Heart right ventricle (tissue), 16 donors: ENCODE measurements at regions of chr22 and their contacts with region 1.

Region 1: GRCh38 chr22:28442264-28442710 is 237.4 kb downstream of the TTC28 start:
- DNase-seq: peak; percentile 77 to 83
- ATAC-seq: peak; percentile 89 to 97 (median 94)
- H3K4me3 ChIP-seq: peak overlapping the region; percentile 38 to 79 (median 66)
- H3K27ac ChIP-seq: peak overlapping the region; percentile 74 to 91 (median 83)
- H3K4me1 ChIP-seq: peaks cover 0 to 57% (median 30%) of the 10 kb centered on the region in 9 donors
- H3K27me3 ChIP-seq: no peaks in the 10 kb centered on the region
- CTCF ChIP-seq: peak; percentile 55 to 86 (median 76)

Region 2: DNA sequence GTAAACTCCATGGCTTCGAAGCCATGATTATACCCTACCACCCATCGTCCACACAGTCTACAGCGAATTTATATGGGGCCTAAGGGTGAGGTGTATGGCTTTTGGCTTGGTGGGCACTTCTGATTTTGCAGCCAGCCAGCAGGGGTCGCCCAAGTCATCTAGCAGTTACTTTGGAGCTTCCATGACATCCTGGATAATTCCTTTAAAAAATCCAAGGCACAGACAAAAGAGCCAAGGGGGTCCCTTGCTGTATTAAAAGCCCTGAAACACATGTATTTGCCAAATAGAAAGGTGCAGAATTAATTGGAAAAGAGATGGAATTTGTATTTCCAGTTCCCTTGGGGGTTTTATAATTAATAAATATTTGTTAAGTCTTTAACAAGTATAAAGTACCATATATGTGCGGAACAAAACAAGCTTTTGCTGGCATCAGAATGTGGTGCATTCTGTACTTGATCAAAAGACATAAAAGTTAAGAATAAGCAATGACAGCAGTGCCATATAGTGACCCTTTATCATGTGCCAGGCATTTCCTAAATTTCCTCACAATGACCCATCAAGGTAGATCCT is 390.4 kb before region 1 on chr22:
- intact Hi-C with region 1: loop called (anchors 2 to 10 kb)
- DNase-seq: peak; percentile 72 to 81
- ATAC-seq: peak in 7 of 8 donors; percentile 50 to 73 (median 71)
- H3K4me3 ChIP-seq: no peak overlapping the region
- H3K27ac ChIP-seq: no peak overlapping the region
- H3K4me1 ChIP-seq: peaks cover 0 to 31% (median 7%) of the 10 kb centered on the region in 9 donors
- H3K27me3 ChIP-seq: no peaks in the 10 kb centered on the region
- CTCF ChIP-seq: peak; percentile 77 to 95 (median 87)

Region 3: DNA sequence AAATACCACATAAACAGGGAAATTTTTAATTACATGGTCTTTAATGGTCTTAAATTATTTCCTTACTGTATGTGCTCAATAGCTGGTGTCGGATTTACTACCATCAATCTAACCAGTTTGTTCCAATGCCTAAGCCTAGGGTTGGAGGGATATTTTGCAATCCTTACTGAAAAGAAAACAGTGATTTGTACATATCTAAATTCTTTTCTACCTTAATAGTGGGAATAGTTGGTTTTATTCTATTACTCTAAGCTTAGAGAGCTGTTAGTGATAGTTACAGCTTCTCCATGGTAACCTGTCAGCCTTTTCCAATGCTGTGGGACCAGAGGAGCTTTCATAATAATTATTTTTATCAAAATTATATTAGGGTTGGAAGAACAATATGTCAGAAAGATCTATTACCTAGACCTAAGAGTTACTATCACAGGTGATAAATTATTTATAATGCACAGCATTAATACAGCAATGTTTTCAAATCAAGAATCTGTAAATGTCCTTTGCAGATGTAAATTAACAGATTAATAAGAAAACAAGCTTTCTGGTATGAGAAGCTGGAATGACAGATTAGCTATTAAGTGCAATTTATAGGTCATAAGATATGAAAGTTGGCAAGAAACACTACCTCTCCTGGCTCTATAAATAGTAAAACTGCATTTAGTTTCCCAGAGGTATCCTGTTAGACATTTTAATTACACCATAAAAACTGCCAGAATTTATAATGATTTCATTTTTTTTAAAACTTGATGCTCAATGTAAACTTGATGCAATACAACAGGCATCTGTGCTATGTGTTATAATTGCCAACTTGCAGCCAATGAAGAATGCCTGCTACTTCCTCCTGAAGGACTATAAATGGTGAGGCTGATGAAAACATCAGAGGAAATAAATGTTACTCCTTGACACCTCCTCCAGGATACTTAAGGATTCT is 261.2 kb before region 1 on chr22:
- intact Hi-C with region 1: loop called in 1 of 10 experiments (anchors 5 kb)
- DNase-seq: no peak
- ATAC-seq: peak in 2 of 8 donors; percentile 20 to 71
- H3K4me3 ChIP-seq: no peak overlapping the region
- H3K27ac ChIP-seq: no peak overlapping the region
- H3K4me1 ChIP-seq: peaks cover 0 to 36% (median 31%) of the 10 kb centered on the region in 9 donors
- H3K27me3 ChIP-seq: no peaks in the 10 kb centered on the region
- CTCF ChIP-seq: no peak

Region 4: GRCh38 chr22:28268171-28268570 is 174.1 kb before region 1 on chr22:
- intact Hi-C with region 1: loop called in 1 of 10 experiments (anchors 5 kb)
- DNase-seq: no peak
- ATAC-seq: peak in 1 of 8 donors; percentile 38
- H3K4me3 ChIP-seq: no peak overlapping the region
- H3K27ac ChIP-seq: peak overlapping the region in 2 of 10 donors; percentile 44 to 62
- H3K4me1 ChIP-seq: peaks cover 0 to 34% (median 20%) of the 10 kb centered on the region in 9 donors
- H3K27me3 ChIP-seq: no peaks in the 10 kb centered on the region
- CTCF ChIP-seq: no peak

Region 5: GRCh38 chr22:28594797-28595462 is 152.6 kb after region 1 on chr22:
- intact Hi-C with region 1: loop called in 2 of 10 experiments (anchors 10 kb)
- DNase-seq: no peak
- ATAC-seq: peak; percentile 70 to 92 (median 90)
- H3K4me3 ChIP-seq: no peak overlapping the region
- H3K27ac ChIP-seq: no peak overlapping the region
- H3K4me1 ChIP-seq: peaks cover 0 to 8% (median 0%) of the 10 kb centered on the region in 9 donors
- H3K27me3 ChIP-seq: no peaks in the 10 kb centered on the region
- CTCF ChIP-seq: peak; percentile 49 to 91 (median 76)